Activated T-helper 1 cell treated with anti-CD3 and anti-CD28 coated beads, Interleukin-12 subunit alpha, Interleukin-12 subunit beta, Interleukin-2, Interleukin-4 antibody, amounts not matched to agents 30 ng/mL and 10 ng/mL and 1 ng/mL, durations not matched to agents 14 hours and 24 hours and 36 hours (primary cell): ENCODE measurements at regions of chr6 and their contacts with region 1.

Region 1: DNA sequence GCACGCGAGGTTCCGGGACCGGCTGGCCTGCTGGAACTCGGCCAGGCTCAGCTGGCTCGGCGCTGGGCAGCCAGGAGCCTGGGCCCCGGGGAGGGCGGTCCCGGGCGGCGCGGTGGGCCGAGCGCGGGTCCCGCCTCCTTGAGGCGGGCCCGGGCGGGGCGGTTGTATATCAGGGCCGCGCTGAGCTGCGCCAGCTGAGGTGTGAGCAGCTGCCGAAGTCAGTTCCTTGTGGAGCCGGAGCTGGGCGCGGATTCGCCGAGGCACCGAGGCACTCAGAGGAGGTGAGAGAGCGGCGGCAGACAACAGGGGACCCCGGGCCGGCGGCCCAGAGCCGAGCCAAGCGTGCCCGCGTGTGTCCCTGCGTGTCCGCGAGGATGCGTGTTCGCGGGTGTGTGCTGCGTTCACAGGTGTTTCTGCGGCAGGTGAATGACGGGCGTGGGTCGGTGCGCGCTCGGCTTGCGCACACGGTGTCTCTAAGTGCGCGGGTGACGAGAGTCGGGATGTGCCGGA is at the start of gene CDKN1A:
- DNase-seq: peak; percentile 80
- H3K4me3 Mint-ChIP-seq: peak within 1 kb of the TSS; percentile 97
- H3K27ac Mint-ChIP-seq: peak within 1 kb of the TSS; percentile 95
- H3K4me1 Mint-ChIP-seq: peaks cover 67% of the 10 kb centered on the region
- H3K27me3 Mint-ChIP-seq: peaks cover 4% of the 10 kb centered on the region
- total RNA-seq, gene CDKN1A: 105 and 107 TPM in 2 replicates

Region 2: GRCh38 chr6:35920793-35921732 is 757.5 kb before region 1 on chr6 and contains the start of gene SRPK1:
- intact Hi-C with region 1: loop called (anchors 5 kb)
- DNase-seq: peak; percentile 85
- H3K4me3 Mint-ChIP-seq: peak within 1 kb of the TSS; percentile 96
- H3K27ac Mint-ChIP-seq: peak within 1 kb of the TSS; percentile 93
- H3K4me1 Mint-ChIP-seq: peaks cover 49% of the 10 kb centered on the region
- H3K27me3 Mint-ChIP-seq: no peaks in the 10 kb centered on the region
- total RNA-seq, gene SRPK1: 149 and 182 TPM in 2 replicates

Region 3: DNA sequence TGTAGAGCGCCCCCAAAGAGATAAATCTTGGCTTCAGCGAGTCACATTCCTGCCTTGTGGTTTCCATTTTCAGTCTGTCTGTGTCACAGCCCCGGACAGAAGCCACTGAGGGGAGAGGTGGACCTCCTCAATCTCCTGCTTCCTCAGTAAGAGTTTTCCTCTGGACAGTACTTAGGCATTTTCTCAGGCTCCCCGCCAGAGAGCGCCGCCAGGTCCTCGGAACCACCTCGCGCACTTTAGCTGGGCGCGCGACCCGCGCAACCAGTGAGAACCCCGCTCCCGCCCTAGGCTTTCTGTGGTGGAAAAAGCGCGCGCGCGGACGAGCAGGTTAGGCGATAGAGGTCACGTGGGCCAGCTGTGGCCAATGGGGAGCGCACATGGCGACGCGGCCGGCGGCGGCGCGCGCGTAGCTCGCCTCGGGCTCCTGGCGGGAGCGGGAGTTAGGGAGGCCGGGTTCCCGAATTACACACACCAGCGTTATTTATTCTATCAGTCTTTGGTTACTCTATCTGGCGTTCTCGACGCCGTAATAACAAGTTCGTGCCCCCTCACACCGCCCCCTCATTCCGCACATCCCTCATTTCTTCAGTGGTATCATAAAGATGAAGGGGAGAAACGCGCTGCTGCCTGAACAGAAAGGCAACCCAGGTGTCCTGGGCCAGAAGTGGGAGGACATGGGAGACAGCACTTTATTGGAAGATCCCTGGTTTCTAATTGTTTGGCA is 255.3 kb before region 1 on chr6:
- intact Hi-C with region 1: loop called (anchors 1 kb)
- DNase-seq: peak; percentile 97
- H3K4me3 Mint-ChIP-seq: peak overlapping the region; percentile 88
- H3K27ac Mint-ChIP-seq: peak overlapping the region; percentile 84
- H3K4me1 Mint-ChIP-seq: peaks cover 21% of the 10 kb centered on the region
- H3K27me3 Mint-ChIP-seq: peaks cover 11% of the 10 kb centered on the region

Region 4: DNA sequence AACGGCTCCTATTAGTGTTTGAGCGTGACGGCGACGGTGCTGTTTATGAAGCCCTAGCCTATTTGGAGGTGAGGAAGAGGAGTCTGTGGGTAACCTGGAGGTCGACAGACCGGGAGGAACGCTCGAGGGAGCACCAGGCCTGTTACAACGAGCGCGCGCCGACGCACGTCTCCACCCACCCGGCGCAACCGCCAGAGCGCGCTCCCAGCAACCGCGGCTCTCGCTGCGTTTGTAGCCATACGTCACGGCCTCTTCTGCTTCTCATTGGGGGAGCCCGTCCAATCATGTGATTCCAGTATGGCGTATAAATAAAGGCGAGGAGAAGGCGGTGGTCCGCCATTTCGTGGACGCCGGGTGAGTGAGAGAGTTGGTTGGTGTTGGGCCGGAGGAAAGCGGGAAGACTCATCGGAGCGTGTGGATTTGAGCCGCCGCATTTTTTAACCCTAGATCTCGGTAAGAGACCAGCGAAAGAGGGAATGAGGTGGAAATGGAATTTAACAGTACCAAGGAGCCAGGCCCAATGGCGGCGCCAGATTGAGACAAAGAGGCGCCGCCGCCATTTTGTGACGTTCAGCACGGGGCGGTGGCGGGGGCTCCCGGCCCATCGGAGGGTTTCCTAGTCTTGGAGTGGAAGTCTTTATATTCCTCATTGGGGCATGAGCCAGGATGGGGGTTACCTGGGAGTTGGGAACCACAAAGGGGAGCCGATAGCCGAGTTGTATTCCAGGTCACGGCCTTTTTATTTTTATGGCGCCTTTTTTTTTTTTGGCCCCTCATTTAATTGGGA is 84.4 kb before region 1 on chr6 and contains the start of gene SRSF3:
- intact Hi-C with region 1: loop called (anchors 1 kb)
- DNase-seq: peak; percentile 96
- H3K4me3 Mint-ChIP-seq: peak within 1 kb of the TSS; percentile 97
- H3K27ac Mint-ChIP-seq: peak within 1 kb of the TSS; percentile 100
- H3K4me1 Mint-ChIP-seq: peaks cover 44% of the 10 kb centered on the region
- H3K27me3 Mint-ChIP-seq: no peaks in the 10 kb centered on the region
- total RNA-seq, gene SRSF3: 525 and 546 TPM in 2 replicates

Region 5: DNA sequence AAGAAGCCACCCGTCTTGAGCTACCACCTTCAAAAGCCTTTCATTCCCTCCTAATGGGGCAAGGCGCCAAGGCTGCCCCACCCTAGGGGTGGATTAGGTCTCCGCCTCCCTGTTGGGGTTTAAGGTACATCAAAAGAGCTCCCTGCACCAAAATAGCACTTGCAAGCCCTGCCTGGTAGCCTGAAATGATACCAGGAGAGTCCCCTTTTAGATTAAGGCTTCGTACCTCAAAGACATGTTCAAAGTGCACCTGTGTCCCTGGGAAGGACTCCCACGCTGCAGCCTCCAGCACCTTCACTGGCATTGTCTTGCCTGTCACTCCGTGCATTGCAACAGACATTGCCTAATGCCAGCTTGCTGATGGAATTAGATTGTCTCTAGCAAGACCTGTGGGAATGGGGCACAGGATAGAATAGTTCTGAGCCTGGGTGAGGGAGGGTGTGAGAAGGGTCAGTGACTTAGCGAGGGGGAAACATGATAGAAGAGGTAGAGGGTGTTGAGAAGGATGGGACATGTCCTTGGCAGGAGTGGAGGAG is 15.7 kb before region 1 on chr6:
- intact Hi-C with region 1: loop called (anchors 1 kb)
- DNase-seq: no peak
- H3K4me3 Mint-ChIP-seq: no peak overlapping the region
- H3K27ac Mint-ChIP-seq: no peak overlapping the region
- H3K4me1 Mint-ChIP-seq: peaks cover 5% of the 10 kb centered on the region
- H3K27me3 Mint-ChIP-seq: peaks cover 25% of the 10 kb centered on the region

Region 6: GRCh38 chr6:36759148-36759759 is 80.7 kb after region 1 on chr6:
- intact Hi-C with region 1: loop called (anchors 1 kb)
- DNase-seq: peak; percentile 76
- H3K4me3 Mint-ChIP-seq: no peak overlapping the region
- H3K27ac Mint-ChIP-seq: peak overlapping the region; percentile 61
- H3K4me1 Mint-ChIP-seq: peaks cover 49% of the 10 kb centered on the region
- H3K27me3 Mint-ChIP-seq: no peaks in the 10 kb centered on the region

Region 7: DNA sequence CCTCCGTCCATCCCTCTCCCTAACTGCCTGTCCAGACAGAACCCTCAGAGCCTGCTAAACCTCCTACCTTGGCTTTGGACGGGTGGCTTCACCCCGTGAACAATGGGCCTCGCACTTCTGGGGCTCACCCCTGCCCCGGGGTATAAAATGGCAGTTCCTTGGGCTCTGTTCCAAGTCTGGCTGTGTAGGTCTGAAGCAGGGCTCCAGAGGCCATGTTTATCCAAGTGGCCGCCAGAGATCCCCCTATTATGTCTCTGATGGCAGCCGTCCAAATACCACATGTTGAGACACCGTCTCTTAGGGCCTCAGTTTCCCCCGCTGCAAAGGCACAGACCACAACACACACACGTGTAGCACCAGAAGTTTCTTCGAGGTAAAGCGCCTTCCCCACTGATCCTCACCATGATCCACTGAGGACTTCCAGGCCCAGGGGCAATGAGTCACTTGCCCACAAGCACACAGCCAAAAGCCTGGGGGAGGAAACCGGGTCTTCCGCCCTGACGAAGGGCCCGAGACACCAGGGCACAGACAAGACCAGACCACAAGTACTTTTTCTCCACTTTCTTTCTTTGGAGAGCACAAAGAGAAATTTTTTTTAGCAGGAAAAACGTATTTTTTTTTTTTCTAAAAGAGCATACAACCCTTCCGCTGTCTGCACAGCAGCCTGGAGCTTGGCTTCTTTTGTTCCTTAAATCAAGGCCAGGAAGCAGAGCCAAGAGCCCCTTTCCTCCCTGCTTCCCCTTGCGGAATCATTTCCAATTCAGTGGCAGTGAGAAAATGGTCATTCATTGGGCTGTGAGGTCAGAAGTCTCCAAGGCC is 148.9 kb after region 1 on chr6:
- intact Hi-C with region 1: no loop called
- DNase-seq: no peak
- H3K4me3 Mint-ChIP-seq: no peak overlapping the region
- H3K27ac Mint-ChIP-seq: no peak overlapping the region
- H3K4me1 Mint-ChIP-seq: peaks cover 7% of the 10 kb centered on the region
- H3K27me3 Mint-ChIP-seq: peaks cover 8% of the 10 kb centered on the region

Region 8: DNA sequence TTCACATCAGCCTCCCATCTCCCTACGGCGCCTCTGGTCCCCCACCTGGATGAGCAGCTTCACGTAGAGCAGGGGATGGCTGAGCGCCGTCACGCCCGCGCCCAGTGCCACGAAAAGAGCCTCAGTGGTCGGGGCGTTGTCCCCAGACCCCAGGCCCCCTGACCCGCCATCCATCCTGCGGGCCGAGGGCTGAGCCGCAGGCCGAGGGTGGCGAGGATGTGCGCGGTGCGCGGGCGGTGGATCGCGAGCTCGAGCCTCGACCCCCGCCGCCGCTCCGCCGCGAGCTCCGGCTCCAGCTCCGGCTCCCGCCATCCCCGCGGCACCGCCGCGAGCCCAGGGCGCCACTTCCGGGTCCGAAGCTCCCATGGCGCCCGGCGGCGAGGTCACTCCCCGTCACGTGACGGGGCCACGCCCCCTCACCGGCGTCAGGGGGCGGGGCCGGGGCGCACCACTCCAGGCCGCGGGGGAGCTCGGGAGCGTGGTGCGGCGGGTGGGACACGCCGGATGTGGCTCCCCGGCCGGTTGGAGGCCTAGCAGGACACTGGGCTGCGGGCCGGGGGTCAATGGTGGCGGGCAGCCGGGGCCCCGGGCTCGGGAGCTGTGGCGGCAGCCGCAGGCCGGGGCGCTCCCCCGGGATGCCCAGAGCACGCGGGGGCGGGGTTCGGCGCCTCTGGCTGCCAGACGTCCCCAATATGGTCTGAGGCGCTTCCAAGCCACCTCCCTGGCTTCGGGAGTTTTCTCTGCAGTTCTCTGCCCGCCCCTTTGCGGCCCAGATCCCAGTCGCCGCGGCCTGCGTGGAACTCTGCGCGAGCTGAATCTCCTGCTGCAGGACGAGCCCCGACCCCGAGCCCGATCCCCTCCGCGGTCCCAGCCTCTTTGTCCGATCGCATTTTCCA is 307.5 kb after region 1 on chr6 and contains the start of gene MTCH1:
- intact Hi-C with region 1: loop called (anchors 5 kb)
- DNase-seq: peak; percentile 87
- H3K4me3 Mint-ChIP-seq: peak within 1 kb of the TSS; percentile 99
- H3K27ac Mint-ChIP-seq: peak within 1 kb of the TSS; percentile 99
- H3K4me1 Mint-ChIP-seq: peaks cover 27% of the 10 kb centered on the region
- H3K27me3 Mint-ChIP-seq: peaks cover 10% of the 10 kb centered on the region
- total RNA-seq, gene MTCH1: 120 and 127 TPM in 2 replicates